ENCODE measurements at regions of chr18 and their contacts with region 1.

Region 1: DNA sequence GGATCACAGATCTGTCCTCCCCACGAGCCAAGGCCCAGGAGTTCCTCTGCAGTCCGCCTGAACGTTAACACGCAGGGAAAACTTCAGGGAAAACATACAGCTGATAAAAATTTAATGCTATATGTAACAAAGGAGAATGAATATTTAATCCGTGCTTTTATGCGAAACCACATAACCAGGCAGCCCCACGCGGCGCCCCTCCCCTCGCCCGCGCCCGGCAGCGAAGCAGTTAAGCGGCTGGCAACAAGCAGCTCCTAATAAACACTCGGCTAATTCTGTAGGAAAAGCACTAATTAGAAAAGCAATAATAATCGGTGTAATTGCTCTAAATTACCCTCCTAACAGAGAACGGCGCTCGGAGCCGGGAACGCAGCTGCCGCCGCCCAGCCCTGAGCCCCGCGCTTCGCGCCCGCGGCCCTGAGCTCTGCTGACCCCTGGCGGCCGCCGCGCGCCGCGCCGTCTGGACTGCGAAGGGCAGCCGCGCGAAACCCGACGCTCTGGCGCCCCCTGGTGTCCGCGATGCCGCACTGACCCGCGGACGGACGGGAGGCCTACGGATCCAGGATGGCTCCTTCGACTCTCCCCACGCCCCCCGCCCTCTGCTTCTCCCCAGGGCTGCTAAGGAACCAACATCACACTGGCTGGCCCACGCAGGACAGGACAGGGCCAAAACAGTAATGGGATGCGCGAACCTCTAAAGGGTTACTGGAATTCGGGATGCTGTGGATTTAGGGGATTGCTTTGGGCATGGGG is 181.4 kb downstream of the SMAD2 start:
- DNase-seq: no peak
- H3K4me3 ChIP-seq: peak overlapping the region; percentile 15; the same call in 1 of the 2 replicates
- H3K27me3 ChIP-seq: peaks cover 4% of the 10 kb centered on the region; the same call in 1 of the 2 replicates
- CTCF ChIP-seq: peak; percentile 84

Region 2: GRCh38 chr18:47050468-47050867 is 698.6 kb before region 1 on chr18:
- CTCF ChIA-PET with region 1: interaction called, 12 read pairs
- POLR2A ChIA-PET with region 1: no interaction called
- DNase-seq: no peak
- H3K4me3 ChIP-seq: no peak overlapping the region
- H3K27me3 ChIP-seq: no peaks in the 10 kb centered on the region
- CTCF ChIP-seq: peak; percentile 77

Region 3: DNA sequence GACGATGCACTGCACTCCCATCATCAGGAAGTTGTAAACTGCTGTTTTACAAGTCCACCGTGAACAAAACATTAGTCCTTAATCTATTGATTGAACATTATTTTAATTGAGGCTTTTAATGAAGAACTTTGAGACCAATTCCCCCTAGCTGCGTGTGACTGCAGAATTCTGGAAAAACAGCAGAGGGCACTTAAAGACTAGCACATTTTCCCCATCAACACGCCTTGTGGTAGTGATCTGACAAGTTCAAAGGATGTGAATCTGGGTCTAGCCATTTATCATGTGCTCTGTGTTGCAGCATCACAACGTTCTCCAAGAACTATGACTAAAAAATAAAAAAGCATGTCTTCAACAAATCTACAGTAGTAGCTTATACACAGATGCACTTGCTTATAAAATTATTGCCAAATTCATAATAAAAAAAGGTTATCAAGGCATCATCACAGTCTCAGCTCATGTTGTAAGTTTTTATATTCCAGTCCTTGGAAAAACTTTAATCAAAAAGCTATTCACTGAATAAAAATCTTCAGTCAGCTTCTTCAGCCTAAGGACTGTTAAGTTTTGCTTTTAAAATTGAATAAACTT is 533.4 kb before region 1 on chr18:
- CTCF ChIA-PET with region 1: interaction called, 61 read pairs
- POLR2A ChIA-PET with region 1: no interaction called
- DNase-seq: peak; percentile 4
- H3K4me3 ChIP-seq: no peak overlapping the region
- H3K27me3 ChIP-seq: peaks cover 5% of the 10 kb centered on the region
- CTCF ChIP-seq: peak; percentile 58

Region 4: DNA sequence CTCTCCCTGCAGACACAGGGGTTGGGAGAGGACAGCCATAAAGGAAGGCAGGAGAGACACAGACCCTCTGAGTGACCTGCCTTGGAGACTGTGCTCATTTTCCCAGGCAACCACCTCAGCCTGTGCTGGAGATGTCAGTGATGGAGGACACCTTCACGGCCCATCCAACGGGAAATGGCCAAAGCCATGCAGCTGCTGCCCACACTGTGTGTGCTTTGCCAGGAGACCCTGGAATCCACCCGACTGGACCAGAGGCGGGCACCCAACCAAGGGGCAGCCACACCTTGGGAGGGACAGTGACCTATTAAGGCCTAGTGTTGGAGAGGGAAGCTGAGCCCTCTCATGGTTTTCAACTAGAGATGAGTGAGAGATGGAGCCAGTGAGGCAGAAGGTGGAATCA is 11.1 kb before region 1 on chr18:
- CTCF ChIA-PET with region 1: interaction called, 22 read pairs
- POLR2A ChIA-PET with region 1: no interaction called
- DNase-seq: no peak
- H3K4me3 ChIP-seq: no peak overlapping the region
- H3K27me3 ChIP-seq: 0 out of 2 replicates have a peak, but pooled peaks cover 2% of the 10 kb centered on the region
- CTCF ChIP-seq: no peak